CD14-positive monocyte (primary cell): ENCODE measurements at regions of chr3 and their contacts with region 1.

Region 1: DNA sequence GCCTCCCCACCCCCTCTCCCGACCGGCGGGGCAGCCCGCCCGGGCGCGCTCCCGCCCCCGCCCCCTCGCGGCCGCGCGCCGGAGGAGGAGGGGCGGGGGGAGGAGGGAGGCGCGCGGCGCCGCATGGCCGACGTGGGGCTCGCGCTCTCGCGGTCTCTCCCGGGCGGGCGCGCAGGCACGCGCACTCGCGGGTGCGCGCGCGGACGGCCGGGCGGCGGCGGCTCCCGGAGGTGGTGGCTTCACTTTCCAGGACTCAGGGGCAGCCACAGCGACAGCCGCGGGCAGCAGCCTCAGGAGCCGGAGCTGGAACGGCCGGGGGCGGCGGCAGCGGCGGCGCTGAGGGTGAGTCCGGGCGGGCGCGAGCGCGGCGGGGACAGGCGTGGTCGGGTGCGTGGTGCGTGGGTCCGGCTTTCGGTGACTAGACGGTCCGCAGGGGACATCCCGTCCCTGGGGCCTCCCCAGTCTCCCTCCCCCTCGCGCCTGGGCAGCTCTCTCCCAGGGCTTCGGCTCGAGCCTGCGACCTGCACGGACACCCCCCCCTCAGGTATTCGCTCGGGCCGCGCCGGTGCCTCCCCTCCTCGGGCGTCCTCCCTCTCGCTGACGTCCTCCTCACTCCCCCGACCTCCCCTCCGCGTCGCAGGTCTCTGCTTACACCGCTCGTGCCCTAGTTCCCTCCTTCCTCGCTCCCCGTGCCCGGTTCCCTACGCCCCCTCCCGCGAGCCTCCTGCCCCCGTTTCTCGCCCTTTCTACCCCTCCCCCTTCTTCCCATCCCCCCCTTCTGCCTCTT is at the start of gene UBE2E2:
- DNase-seq: peak; percentile 65 to 80 (median 68)
- H3K4me3 ChIP-seq: peak within 1 kb of the TSS; percentile 84 to 97 (median 84)
- H3K4me3 Mint-ChIP-seq: peak within 1 kb of the TSS; percentile 95 to 97
- H3K27ac ChIP-seq: peak within 1 kb of the TSS; percentile 72 to 93
- H3K27ac Mint-ChIP-seq: peak within 1 kb of the TSS; percentile 86 to 96 (median 90)
- H3K4me1 ChIP-seq: peaks cover 10 to 14% of the 10 kb centered on the region in 2 donors
- H3K4me1 Mint-ChIP-seq: peaks cover 27% of the 10 kb centered on the region
- H3K27me3 ChIP-seq: no peaks in the 10 kb centered on the region
- H3K27me3 Mint-ChIP-seq: peaks cover 5 to 11% (median 7%) of the 10 kb centered on the region in 3 donors
- CTCF ChIP-seq: no peak
- polyA plus RNA-seq, gene UBE2E2: 25.8 to 78.0 (median 66.3) TPM

Region 2: DNA sequence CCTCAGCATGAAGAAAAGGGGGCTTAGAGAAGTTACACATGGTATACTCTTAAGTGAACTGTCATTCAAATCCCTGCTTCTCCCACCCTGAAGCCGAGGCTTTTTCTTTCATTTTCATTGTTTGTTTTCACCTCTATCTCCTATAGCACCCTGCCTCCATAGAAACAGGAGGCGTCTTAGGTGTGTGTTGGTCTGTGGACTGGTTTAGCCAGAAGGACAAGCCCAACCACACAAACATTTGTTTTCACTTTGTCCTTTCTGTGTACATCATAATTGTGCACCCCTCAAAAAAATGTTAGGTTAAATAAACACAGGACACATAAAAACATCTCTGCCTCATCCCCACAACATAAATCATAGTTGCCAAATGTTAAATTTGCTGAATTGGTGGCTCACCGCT is 73.3 kb before region 1 on chr3:
- intact Hi-C with region 1: loop called in 1 of 2 experiments (anchors 10 kb)
- DNase-seq: no peak
- H3K4me3 ChIP-seq: no peak overlapping the region
- H3K4me3 Mint-ChIP-seq: no peak overlapping the region
- H3K27ac ChIP-seq: no peak overlapping the region
- H3K27ac Mint-ChIP-seq: no peak overlapping the region
- H3K4me1 ChIP-seq: no peaks in the 10 kb centered on the region
- H3K4me1 Mint-ChIP-seq: no peaks in the 10 kb centered on the region
- H3K27me3 ChIP-seq: no peaks in the 10 kb centered on the region
- H3K27me3 Mint-ChIP-seq: peaks cover 0 to 2% (median 0%) of the 10 kb centered on the region in 3 donors
- CTCF ChIP-seq: no peak